Activated B cell treated with CpG ODN at 0.5 μM for 24 hours (primary cell): ENCODE measurements at regions of chr15 and their contacts with region 1.

Region 1: DNA sequence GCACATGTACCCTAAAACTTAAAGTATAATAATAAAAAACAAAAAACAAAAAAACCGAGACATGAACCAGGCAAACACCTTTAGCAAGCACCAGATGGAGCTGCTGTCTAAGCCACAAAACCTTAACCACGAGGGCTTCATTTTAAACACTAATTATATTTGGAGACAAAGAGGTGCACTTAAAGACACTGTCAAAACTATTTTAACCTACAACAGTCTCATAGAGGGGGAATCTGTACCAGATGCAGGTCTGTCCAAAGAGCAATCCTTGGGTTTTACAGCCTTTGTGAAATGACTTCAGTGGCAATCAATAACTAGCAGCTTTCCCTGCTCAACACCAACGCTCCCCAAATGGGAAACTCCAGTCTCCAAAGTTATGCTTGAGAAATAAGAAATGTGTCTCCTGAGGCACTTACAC is 115.7 kb upstream of the TSPAN3 start:
- DNase-seq: no peak
- ATAC-seq: no peak
- H3K4me3 Mint-ChIP-seq: no peak overlapping the region
- H3K27ac Mint-ChIP-seq: peak overlapping the region; percentile 87
- H3K4me1 Mint-ChIP-seq: peaks cover 81% of the 10 kb centered on the region
- H3K27me3 Mint-ChIP-seq: no peaks in the 10 kb centered on the region
- CTCF ChIP-seq: no peak

Region 2: DNA sequence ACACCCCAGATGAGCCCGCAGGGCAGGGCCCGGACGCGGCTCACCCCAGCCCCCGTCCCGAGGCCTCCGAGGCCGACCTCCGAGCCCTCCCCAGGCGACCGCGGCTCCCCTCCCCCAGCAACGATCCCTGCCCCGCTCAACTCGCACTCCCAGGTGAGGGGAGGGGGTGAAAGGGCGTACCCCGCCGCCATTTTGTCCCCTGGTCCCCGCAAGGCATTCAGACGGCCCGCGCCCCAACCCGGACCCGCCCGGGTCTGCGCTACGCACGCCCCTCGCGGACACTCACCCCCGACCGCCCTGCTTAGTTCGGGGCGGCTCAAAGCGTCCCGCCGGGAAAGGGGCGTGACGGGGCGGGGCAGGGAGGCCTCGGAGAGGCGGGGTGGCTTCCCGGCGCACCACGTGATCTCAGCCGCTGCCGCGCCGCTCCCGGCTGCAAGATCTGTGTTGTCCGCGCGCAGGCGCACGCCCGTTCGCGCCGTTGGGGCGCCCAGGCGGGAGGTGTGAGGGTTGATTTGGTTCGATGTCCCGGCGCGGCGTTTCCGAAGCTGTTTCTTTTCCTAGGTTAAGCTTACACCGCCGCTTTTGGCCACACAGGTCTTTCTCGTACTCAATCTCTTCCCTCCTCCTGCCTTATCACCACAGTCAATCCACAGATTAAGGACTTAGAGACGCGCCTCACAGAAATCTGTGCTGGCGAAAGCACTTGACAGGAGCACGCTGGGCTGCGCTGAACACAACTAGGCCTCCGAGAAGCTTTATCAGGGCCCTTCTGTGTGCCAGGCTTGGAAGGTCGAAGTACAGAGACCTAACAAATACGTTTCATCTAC is 281.4 kb before region 1 on chr15 and contains the start of gene SCAPER:
- CTCF ChIA-PET with region 1: no interaction called
- POLR2A ChIA-PET with region 1: interaction called, 3 read pairs
- intact Hi-C with region 1: loop called (anchors 5 kb)
- DNase-seq: peak; percentile 92
- ATAC-seq: peak; percentile 86
- H3K4me3 Mint-ChIP-seq: peak within 1 kb of the TSS; percentile 94
- H3K27ac Mint-ChIP-seq: peak within 1 kb of the TSS; percentile 87
- H3K4me1 Mint-ChIP-seq: peaks cover 48% of the 10 kb centered on the region
- H3K27me3 Mint-ChIP-seq: no peaks in the 10 kb centered on the region
- CTCF ChIP-seq: no peak
- total RNA-seq, gene SCAPER: 28.9 and 38.8 TPM in 2 replicates

Region 3: GRCh38 chr15:77118882-77119321 is 67.7 kb before region 1 on chr15:
- CTCF ChIA-PET with region 1: interaction called, 33 read pairs
- POLR2A ChIA-PET with region 1: interaction called, 3 read pairs
- intact Hi-C with region 1: loop called (anchors 1 kb)
- DNase-seq: no peak
- ATAC-seq: peak; percentile 62
- H3K4me3 Mint-ChIP-seq: no peak overlapping the region
- H3K27ac Mint-ChIP-seq: no peak overlapping the region
- H3K4me1 Mint-ChIP-seq: peaks cover 40% of the 10 kb centered on the region
- H3K27me3 Mint-ChIP-seq: no peaks in the 10 kb centered on the region
- CTCF ChIP-seq: no peak

Region 4: DNA sequence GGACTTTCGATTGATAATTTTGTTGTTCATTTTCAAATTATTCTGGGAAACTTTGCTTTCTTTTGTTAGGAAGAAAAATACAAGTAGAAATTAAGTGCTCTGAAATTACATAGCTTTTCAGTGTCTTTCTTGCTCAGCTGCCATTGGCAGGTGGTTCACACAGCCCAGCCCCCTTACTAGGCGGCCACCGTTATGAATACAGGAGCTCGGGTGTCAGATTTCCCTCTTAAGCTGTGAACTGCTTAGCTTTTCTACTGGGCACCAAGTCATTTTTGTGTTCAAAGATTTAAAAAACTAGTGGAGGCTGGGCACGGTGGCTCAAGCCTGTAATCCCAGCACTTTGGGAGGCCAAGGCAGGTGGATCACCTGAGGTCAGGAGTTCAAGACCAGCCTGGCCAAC is 289.3 kb after region 1 on chr15:
- CTCF ChIA-PET with region 1: no interaction called
- POLR2A ChIA-PET with region 1: no interaction called
- intact Hi-C with region 1: no loop called
- DNase-seq: no peak
- ATAC-seq: no peak
- H3K4me3 Mint-ChIP-seq: no peak overlapping the region
- H3K27ac Mint-ChIP-seq: no peak overlapping the region
- H3K4me1 Mint-ChIP-seq: no peaks in the 10 kb centered on the region
- H3K27me3 Mint-ChIP-seq: no peaks in the 10 kb centered on the region
- CTCF ChIP-seq: no peak

Region 5: GRCh38 chr15:77496710-77497103 is 310.1 kb after region 1 on chr15:
- CTCF ChIA-PET with region 1: interaction called, 144 read pairs
- POLR2A ChIA-PET with region 1: interaction called, 5 read pairs
- intact Hi-C with region 1: loop called (anchors 1 kb)
- DNase-seq: peak; percentile 67
- ATAC-seq: peak; percentile 75
- H3K4me3 Mint-ChIP-seq: no peak overlapping the region
- H3K27ac Mint-ChIP-seq: no peak overlapping the region
- H3K4me1 Mint-ChIP-seq: peaks cover 17% of the 10 kb centered on the region
- H3K27me3 Mint-ChIP-seq: no peaks in the 10 kb centered on the region
- CTCF ChIP-seq: peak; percentile 66

Region 6: GRCh38 chr15:77633134-77633912 is 446.7 kb after region 1 on chr15:
- CTCF ChIA-PET with region 1: interaction called, 10 read pairs
- POLR2A ChIA-PET with region 1: no interaction called
- intact Hi-C with region 1: loop called (anchors 2 kb)
- DNase-seq: peak; percentile 71
- ATAC-seq: peak; percentile 93
- H3K4me3 Mint-ChIP-seq: peak overlapping the region; percentile 75
- H3K27ac Mint-ChIP-seq: no peak overlapping the region
- H3K4me1 Mint-ChIP-seq: peaks cover 12% of the 10 kb centered on the region
- H3K27me3 Mint-ChIP-seq: peaks cover 45% of the 10 kb centered on the region
- CTCF ChIP-seq: peak; percentile 97

Region 7: GRCh38 chr15:78761891-78762385 is 1575.3 kb after region 1 on chr15:
- CTCF ChIA-PET with region 1: no interaction called
- POLR2A ChIA-PET with region 1: no interaction called
- intact Hi-C with region 1: loop called (anchors 5 kb)
- DNase-seq: no peak
- ATAC-seq: no peak
- H3K4me3 Mint-ChIP-seq: peak overlapping the region; percentile 46
- H3K27ac Mint-ChIP-seq: peak overlapping the region; percentile 77
- H3K4me1 Mint-ChIP-seq: peaks cover 62% of the 10 kb centered on the region
- H3K27me3 Mint-ChIP-seq: no peaks in the 10 kb centered on the region
- CTCF ChIP-seq: no peak